IMR-90 (cell line): ENCODE measurements at regions of chr22 and their contacts with region 1.

Region 1: DNA sequence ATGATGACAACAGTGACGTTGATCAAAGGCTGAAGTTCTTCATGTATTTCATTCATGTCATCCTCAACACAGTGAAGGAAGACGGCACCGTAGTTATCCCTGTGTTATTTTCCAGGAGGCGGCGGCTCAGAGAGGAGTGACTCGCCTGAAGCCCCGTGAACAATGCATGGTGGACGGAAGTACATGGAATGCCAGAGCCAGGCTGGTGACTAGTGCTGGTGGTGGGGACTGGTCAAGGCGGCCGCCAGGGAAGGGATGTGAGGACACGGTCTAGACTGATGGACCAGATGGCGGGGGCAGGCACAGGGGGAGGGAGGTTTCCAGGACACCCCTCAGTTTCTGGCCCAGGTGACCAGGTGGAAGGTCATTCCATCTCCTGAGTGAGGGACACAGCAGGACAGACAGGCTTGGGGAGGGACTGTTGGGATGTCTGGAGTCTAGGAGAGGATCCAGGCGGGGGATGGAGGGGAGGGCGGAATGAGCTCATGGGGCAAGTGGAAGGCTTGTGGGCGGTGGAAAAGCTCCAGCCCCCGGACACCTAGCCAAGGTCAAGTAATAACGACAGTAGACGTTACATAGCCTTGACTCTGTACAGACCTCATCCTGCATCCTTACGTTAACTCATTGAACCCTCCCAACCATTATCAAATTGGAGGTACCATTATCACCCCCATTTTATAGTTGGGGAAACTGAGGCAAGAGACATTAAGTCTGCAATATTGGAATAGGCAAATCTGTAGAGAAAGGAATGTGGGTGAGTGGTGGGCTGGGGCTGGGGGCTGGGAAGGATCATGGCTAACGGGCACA is 16.0 kb upstream of the PICK1 start:
- DNase-seq: peak; percentile 35
- ATAC-seq: no peak
- H3K4me3 ChIP-seq: no peak overlapping the region
- H3K27ac ChIP-seq: no peak overlapping the region
- H3K4me1 ChIP-seq: no peaks in the 10 kb centered on the region
- H3K27me3 ChIP-seq: peaks cover 2% of the 10 kb centered on the region; the same call in 1 of the 2 replicates
- CTCF ChIP-seq: no peak
- POLR2A ChIP-seq: no peak
- RAD21 ChIP-seq: no peak

Region 2: GRCh38 chr22:37400719-37401118 is 640.4 kb before region 1 on chr22:
- CTCF ChIA-PET with region 1: no interaction called
- POLR2A ChIA-PET with region 1: no interaction called
- dilution Hi-C with region 1: no loop called
- in situ Hi-C with region 1: no loop called
- intact Hi-C with region 1: no loop called
- DNase-seq: no peak
- ATAC-seq: no peak
- H3K4me3 ChIP-seq: no peak overlapping the region
- H3K27ac ChIP-seq: no peak overlapping the region
- H3K4me1 ChIP-seq: peaks cover 4% of the 10 kb centered on the region; the same call in 1 of the 2 replicates
- H3K27me3 ChIP-seq: no peaks in the 10 kb centered on the region; the same call in 1 of the 2 replicates
- CTCF ChIP-seq: no peak
- POLR2A ChIP-seq: no peak
- RAD21 ChIP-seq: no peak

Region 3: DNA sequence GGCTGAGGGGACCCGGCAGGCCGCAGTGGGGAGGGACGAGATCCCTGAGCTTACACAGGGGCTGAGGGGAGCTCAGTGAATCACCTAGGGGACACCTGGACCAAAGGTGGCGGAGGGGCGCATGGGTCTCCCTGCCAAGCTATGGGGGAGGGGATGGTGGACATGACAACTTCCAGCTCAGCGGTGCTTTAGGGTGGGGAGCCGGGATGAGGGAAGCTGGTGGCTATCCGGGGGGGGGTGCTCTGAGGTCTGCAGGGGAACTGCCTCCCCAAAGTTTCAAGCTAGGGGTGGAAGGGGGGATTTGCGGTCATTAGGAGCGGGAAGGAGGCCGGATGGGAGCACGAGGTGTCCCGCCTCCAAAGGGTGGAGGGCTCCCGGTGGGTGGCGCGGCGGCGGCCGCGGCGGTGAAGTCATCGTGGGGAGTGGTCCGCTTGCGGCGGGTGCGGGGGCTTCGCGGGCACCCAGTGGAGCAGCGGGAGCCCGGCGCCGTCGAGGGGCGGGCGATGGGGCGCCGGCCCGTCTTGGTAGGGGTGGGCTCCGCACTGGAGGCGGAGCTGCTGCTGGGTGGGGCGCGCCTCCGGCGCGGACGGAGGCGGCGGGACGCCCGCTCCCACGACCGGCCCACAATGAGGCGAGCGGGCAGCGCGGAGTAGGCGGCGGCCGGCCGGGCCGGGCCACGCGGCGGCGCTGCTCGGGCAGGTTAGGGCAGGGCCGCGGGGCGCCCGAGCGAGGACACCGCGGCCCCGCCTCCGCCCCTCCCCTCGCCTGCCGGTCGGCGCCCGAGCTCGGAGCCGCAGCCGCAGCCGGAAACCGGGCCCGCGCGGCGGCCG is 135.4 kb before region 1 on chr22 and contains the start of gene MICALL1:
- CTCF ChIA-PET with region 1: no interaction called
- POLR2A ChIA-PET with region 1: no interaction called
- dilution Hi-C with region 1: no loop called
- in situ Hi-C with region 1: no loop called
- intact Hi-C with region 1: no loop called
- DNase-seq: peak; percentile 67
- ATAC-seq: peak; percentile 84
- H3K4me3 ChIP-seq: peak within 1 kb of the TSS; percentile 97
- H3K27ac ChIP-seq: peak within 1 kb of the TSS; percentile 87
- H3K4me1 ChIP-seq: peaks cover 24% of the 10 kb centered on the region
- H3K27me3 ChIP-seq: no peaks in the 10 kb centered on the region
- CTCF ChIP-seq: peak; percentile 46
- POLR2A ChIP-seq: peak; percentile 73; the same call in 1 of the 2 replicates
- RAD21 ChIP-seq: no peak
- total RNA-seq, gene MICALL1: 12.2 and 12.4 TPM in 2 replicates

Region 4: DNA sequence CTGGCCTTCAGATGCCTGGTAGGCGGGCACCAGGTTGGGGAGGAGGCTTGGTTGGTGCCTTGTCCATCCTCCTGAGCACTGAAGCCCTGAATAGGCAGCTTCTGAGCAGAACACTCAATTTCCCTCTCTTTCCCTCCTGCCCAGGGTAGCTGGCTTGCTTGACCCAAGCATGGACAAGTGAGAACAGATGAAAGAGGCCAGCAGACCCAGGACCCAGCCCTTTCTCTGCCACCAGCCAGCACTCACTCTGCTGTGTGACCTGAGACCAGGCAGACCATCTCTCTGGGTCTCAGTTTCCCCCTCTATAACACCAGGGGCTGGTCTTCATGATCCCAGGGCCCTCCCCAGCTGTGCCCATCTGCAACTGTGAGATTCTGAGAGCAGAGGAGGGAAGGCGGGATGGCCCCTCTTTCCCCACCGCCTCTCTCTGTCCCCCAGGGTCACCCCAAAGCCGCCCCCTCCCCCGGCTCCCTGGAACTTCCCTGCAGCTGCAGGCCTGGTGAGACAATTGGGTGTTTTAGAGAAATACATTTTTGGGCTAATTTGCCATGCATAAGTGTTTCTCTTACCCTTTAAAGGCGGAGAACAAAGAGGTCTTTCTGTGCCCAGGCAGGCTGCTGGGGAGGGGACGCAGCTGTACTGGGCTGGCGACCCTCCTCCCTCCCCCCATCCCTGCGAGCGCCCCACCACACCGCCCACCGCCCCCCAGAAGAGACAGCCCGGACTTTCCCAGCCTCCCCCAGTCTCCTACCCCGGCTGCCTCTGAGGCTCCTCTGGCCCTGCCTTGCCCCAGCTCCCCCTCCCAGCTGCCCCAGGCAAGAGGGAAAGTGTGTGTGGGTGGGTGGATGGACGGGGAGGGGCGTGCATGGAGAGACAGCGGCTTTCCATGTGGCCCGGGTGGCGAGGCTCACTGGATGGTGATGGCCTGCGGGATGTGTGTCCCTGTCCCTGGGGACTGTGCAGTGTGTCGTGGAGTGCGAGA is 14.7 kb before region 1 on chr22:
- CTCF ChIA-PET with region 1: no interaction called
- POLR2A ChIA-PET with region 1: interaction called, 10 read pairs
- dilution Hi-C with region 1: no loop called
- in situ Hi-C with region 1: no loop called
- intact Hi-C with region 1: no loop called
- DNase-seq: no peak
- ATAC-seq: no peak
- H3K4me3 ChIP-seq: no peak overlapping the region
- H3K27ac ChIP-seq: no peak overlapping the region
- H3K4me1 ChIP-seq: no peaks in the 10 kb centered on the region
- H3K27me3 ChIP-seq: peaks cover 27% of the 10 kb centered on the region
- CTCF ChIP-seq: no peak
- POLR2A ChIP-seq: no peak
- RAD21 ChIP-seq: no peak